Prostate gland (tissue), 2 donors: ENCODE measurements at regions of chr2 and their contacts with region 1.

Region 1: DNA sequence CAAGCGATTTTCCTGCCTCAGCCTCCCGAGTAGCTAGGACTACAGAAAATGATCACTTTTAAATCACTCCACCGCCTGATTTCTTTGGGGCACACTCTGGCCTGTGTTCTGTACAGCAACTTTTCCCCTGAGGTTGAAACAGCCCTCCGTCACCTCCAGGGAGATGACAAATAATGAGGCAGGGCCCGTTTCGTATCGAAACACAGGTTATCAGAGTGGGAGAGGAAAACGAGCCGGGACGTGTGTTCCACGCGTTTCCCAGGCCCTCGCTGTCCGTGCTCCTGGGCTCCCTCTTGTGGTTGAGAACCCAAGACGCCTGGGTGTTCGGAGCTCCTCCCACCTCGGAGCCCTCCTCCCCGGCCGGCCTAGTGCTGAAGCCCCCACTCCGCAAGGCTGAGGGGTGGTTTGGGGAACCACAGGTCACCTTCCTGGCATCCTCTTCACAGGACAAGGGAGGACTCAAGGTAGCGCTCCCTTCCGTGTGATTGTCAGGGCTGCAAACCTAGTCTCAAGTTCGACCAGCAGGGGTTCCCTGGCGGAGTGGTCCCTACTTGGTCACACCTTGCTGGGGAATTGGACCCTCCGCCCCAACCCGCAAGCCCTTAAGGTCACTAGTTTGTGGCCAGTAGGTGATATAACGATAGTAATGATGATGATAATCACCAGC is 12.8 kb downstream of the ATP6V1B1 start:
- DNase-seq: peak; percentile 67
- H3K4me3 ChIP-seq: peak overlapping the region in 1 of 2 donors; percentile 14
- H3K27ac ChIP-seq: no peak overlapping the region
- H3K4me1 ChIP-seq: no peaks in the 10 kb centered on the region
- H3K27me3 ChIP-seq: no peaks in the 10 kb centered on the region
- CTCF ChIP-seq: peak; percentile 46 to 75 (median 56)
- POLR2A ChIP-seq: no peak

Region 2: GRCh38 chr2:70871398-70872211 is 76.9 kb before region 1 on chr2:
- intact Hi-C with region 1: loop called (anchors 5 kb)
- DNase-seq: peak; percentile 80
- H3K4me3 ChIP-seq: no peak overlapping the region
- H3K27ac ChIP-seq: no peak overlapping the region
- H3K4me1 ChIP-seq: peaks cover 2% of the 10 kb centered on the region
- H3K27me3 ChIP-seq: no peaks in the 10 kb centered on the region
- CTCF ChIP-seq: peak; percentile 82 to 94 (median 90)
- POLR2A ChIP-seq: no peak

Region 3: GRCh38 chr2:71471276-71471675 is 522.8 kb after region 1 on chr2:
- intact Hi-C with region 1: no loop called
- DNase-seq: no peak
- H3K4me3 ChIP-seq: no peak overlapping the region
- H3K27ac ChIP-seq: no peak overlapping the region
- H3K4me1 ChIP-seq: no peaks in the 10 kb centered on the region
- H3K27me3 ChIP-seq: no peaks in the 10 kb centered on the region
- CTCF ChIP-seq: no peak
- POLR2A ChIP-seq: no peak